ENCODE measurements at regions of chr18 and their contacts with region 1.

Region 1: DNA sequence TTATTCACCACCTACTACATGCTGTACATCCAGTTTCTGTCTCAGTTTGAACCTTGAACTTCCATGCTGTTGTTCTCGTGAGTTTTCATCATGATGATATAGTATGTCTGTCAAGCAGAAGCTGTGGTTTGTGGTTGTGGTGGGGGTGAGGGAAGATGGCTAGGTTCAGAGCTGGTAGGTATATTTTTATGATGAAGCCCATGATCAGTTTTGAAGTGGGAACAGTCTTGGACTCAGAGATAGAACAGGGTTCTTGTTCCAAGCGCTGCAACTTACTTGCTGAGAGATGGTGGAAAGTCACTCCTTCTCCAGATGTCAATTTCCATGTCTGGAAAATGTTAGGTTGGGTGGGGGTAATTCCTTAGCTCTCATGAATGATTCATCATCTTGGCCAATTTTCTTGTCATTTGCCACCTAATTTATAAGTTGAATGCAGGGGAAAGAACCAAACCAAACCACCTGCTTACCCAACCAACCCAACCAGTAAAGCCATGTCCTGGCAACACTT is 21.6 kb downstream of the PMAIP1 start:
- DNase-seq: peak; percentile 82
- H3K4me3 Mint-ChIP-seq: no peak overlapping the region
- H3K27ac Mint-ChIP-seq: no peak overlapping the region
- H3K4me1 Mint-ChIP-seq: peaks cover 38% of the 10 kb centered on the region
- H3K27me3 Mint-ChIP-seq: peaks cover 6% of the 10 kb centered on the region

Region 2: DNA sequence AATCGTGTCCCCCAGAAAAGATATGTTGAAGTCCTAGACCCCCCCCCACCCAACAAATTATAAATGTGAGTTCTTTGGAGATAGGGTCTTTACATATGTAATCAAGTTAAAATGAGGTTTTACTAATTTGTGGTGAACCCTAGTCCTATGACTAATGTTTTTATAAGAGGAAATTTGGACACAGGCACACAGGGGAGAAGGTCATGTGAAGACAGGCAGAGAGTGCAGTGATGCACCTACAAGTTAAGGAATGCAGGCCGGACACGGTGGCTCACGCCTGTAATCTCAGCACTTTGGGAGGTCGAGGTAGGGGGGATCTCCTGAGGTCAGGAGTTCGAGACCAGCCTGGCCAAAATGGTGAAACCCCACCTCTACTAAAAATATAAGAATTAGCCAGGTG is 27.5 kb before region 1 on chr18:
- CTCF ChIA-PET with region 1: no interaction called
- intact Hi-C with region 1: no loop called
- DNase-seq: no peak
- H3K4me3 Mint-ChIP-seq: no peak overlapping the region
- H3K27ac Mint-ChIP-seq: no peak overlapping the region
- H3K4me1 Mint-ChIP-seq: peaks cover 7% of the 10 kb centered on the region
- H3K27me3 Mint-ChIP-seq: no peaks in the 10 kb centered on the region

Region 3: DNA sequence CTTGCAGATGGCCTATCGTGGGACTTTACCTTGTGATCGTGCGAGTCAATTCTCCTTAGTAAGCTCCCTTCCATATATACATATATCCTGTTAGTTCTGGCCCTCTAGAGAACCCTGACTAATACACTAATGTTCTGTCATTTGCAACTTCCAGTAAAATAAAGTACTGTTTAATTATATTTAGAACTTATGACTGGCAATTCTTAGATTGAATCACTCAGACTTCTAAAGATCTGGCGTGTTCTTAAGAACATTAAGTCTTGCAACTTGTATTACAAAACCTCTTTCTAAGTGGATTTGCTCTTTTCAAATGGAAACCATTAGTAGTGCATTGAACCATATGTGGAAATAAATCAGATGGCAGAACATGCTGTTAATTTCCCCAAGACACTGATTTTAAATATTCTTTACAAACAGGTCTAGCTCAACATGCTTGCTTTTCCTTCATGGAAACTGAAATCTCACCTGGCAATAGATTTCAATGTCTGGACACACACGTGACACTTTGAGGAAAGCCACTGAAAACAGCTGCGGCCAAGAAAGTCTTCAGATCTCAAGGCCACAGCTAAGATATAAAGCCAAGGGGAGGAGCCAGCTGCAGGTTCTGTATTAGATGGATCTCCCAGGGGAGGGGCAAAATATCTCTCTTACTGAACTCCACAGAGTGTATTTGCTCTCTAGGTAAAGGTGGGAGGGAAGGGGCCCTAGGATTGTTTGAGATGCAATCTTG is 28.9 kb after region 1 on chr18:
- CTCF ChIA-PET with region 1: no interaction called
- intact Hi-C with region 1: loop called (anchors 1 kb)
- DNase-seq: peak; percentile 18
- H3K4me3 Mint-ChIP-seq: no peak overlapping the region
- H3K27ac Mint-ChIP-seq: no peak overlapping the region
- H3K4me1 Mint-ChIP-seq: peaks cover 20% of the 10 kb centered on the region
- H3K27me3 Mint-ChIP-seq: no peaks in the 10 kb centered on the region

Region 4: GRCh38 chr18:60277855-60278480 is 356.5 kb after region 1 on chr18:
- CTCF ChIA-PET with region 1: no interaction called
- intact Hi-C with region 1: no loop called
- DNase-seq: no peak
- H3K4me3 Mint-ChIP-seq: no peak overlapping the region
- H3K27ac Mint-ChIP-seq: no peak overlapping the region
- H3K4me1 Mint-ChIP-seq: no peaks in the 10 kb centered on the region
- H3K27me3 Mint-ChIP-seq: no peaks in the 10 kb centered on the region